T-cell (primary cell): ENCODE measurements at regions of chr10 and their contacts with region 1.

Region 1: DNA sequence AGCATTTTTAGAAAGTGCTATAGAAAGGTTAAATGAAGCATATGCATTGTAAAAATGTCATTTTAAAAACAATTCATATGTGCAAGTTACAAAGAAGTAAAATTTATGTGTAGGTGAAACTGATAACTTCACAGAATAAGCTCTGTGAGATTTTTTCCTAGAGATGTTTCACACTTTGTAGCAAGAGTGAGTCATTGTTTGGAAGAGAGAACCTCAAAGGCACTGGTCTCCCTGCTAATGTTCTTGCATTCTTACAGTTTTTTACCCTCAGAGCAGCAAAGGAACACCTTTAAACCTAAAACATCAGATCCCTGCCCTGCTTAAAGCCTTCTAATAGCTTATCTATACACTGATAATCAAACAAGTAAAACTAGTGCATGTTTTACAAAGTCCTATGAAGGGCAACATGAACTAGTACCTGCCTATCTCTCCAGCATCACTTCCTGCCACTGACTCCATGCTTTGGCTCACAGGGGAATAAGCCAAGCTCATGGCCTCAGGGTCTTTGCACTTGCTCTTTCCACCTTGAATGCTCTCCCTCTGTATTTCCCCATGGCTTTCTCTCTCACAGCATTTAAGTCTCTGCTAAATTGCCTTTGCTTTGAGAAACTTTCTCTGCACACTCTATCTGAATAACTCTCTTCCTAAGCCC is 997.0 kb downstream of the GATA3 start:
- DNase-seq: no peak
- ATAC-seq: peak in 3 of 4 experiments; percentile 37 to 47 (median 46)
- H3K4me3 ChIP-seq: no peak overlapping the region
- H3K4me3 Mint-ChIP-seq: no peak overlapping the region
- H3K27ac ChIP-seq: no peak overlapping the region
- H3K27ac Mint-ChIP-seq: peak overlapping the region; percentile 8 to 29
- H3K4me1 ChIP-seq: no peaks in the 10 kb centered on the region
- H3K4me1 Mint-ChIP-seq: peaks cover 15 to 19% (median 17%) of the 10 kb centered on the region in 3 donors
- H3K27me3 ChIP-seq: peaks cover 0 to 1% of the 10 kb centered on the region in 2 experiments
- H3K27me3 Mint-ChIP-seq: peaks cover 0 to 2% of the 10 kb centered on the region in 2 donors

Region 2: DNA sequence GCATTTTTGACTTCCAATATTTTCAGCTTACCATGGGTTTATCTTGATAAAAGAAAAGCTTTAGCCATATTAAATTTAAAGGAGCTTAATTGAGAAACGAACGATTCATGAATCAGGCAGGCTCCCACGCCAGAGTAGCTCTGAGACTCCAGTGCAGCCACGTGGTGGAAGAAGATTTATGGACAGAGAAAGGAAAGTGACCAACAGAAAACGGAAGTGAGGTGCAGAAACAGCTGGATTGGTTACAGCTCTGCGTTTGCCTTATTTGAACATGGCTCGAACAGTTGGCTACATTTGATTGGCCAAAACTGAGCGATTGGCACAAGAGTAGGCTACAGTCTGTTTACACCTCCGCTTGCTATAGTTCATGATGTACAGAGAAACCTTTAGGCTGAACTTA is 601.5 kb before region 1 on chr10:
- CTCF ChIA-PET with region 1: no interaction called
- POLR2A ChIA-PET with region 1: interaction called in 1 of 2 experiments, 10 read pairs
- DNase-seq: no peak
- ATAC-seq: no peak
- H3K4me3 ChIP-seq: no peak overlapping the region
- H3K4me3 Mint-ChIP-seq: no peak overlapping the region
- H3K27ac ChIP-seq: no peak overlapping the region
- H3K27ac Mint-ChIP-seq: no peak overlapping the region
- H3K4me1 ChIP-seq: no peaks in the 10 kb centered on the region
- H3K4me1 Mint-ChIP-seq: peaks cover 0 to 6% (median 5%) of the 10 kb centered on the region in 3 donors
- H3K27me3 ChIP-seq: peaks cover 0 to 6% of the 10 kb centered on the region in 2 experiments
- H3K27me3 Mint-ChIP-seq: no peaks in the 10 kb centered on the region

Region 3: DNA sequence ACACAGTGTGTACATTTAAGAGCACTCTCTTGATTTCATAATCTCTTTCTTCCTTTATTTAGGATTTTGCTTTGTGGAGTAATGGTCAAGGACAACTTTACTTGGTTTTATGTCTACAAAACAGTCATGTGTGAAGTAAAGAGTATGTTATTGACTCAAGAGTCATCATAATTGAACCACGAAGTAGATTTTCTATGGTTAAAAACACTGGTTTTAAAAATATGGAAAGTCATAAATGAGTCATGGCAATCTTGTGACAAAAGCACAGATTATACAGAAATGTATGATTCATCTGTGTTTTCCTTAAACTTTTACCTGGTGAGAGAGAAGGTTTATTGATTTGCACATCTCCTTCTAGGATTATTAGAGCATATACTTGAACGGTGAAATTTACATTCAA is 27.2 kb before region 1 on chr10:
- CTCF ChIA-PET with region 1: no interaction called
- POLR2A ChIA-PET with region 1: no interaction called
- DNase-seq: no peak
- ATAC-seq: no peak
- H3K4me3 ChIP-seq: no peak overlapping the region
- H3K4me3 Mint-ChIP-seq: no peak overlapping the region
- H3K27ac ChIP-seq: no peak overlapping the region
- H3K27ac Mint-ChIP-seq: peak overlapping the region; percentile 36 to 81
- H3K4me1 ChIP-seq: no peaks in the 10 kb centered on the region
- H3K4me1 Mint-ChIP-seq: peaks cover 9 to 22% (median 9%) of the 10 kb centered on the region in 3 donors
- H3K27me3 ChIP-seq: no peaks in the 10 kb centered on the region
- H3K27me3 Mint-ChIP-seq: peaks cover 5 to 9% of the 10 kb centered on the region in 2 donors